Astrocyte of the cerebellum (primary cell): ENCODE measurements at regions of chr3 and their contacts with region 1.

Region 1: DNA sequence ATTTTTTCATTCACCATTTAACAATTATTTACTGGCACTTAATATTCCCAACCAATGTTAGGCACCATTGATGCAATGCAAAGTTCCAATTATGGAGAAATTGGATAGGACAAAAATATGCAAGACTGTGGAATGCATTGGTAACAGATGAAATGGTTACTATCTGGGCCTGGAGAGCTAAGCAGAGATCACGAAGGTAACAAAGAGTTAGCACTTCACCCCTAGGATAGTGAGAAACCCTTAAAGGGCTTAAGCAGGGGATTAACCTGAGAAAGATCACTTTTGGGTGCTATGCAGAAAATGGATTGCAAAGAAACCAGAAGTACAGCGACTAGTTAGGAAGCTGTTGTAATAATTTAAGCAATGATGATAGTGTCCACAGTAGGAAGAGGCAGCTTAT is 129.6 kb upstream of the GPR149 start:
- DNase-seq: no peak
- H3K4me3 ChIP-seq: no peak overlapping the region
- CTCF ChIP-seq: no peak

Region 2: GRCh38 chr3:154486949-154487348 is 72.7 kb before region 1 on chr3:
- in situ Hi-C with region 1: loop called (anchors 5 kb)
- DNase-seq: no peak
- H3K4me3 ChIP-seq: no peak overlapping the region
- CTCF ChIP-seq: no peak